AG04449 (cell line): ENCODE measurements at regions of chr3 and their contacts with region 1.

Region 1: DNA sequence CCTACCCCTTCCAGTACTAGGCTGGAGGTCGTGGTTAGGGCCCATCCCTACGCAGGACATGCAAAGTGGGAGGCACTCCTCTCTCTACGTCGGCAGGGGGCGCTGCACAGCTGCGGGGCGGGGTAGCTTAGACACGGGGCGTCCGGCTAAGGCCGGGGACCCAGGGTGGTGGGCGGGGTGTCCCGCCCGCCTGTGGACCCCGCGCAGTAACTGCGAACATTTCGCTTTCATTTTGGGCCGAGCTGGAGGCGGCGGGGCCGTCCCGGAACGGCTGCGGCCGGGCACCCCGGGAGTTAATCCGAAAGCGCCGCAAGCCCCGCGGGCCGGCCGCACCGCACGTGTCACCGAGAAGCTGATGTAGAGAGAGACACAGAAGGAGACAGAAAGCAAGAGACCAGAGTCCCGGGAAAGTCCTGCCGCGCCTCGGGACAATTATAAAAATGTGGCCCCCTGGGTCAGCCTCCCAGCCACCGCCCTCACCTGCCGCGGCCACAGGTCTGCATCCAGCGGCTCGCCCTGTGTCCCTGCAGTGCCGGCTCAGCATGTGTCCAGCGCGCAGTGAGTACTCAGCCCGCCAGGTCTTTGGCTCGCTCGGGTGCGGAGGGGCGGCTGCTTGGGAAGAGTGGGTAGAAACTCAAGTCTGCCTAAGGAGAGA is at the start of gene IL12A:
- DNase-seq: no peak
- H3K4me3 ChIP-seq: peak within 1 kb of the TSS; percentile 66
- CTCF ChIP-seq: peak; percentile 98

Region 2: GRCh38 chr3:159038405-159038804 is 950.3 kb before region 1 on chr3:
- CTCF ChIA-PET with region 1: no interaction called
- POLR2A ChIA-PET with region 1: no interaction called
- DNase-seq: no peak
- H3K4me3 ChIP-seq: no peak overlapping the region
- CTCF ChIP-seq: no peak

Region 3: GRCh38 chr3:159852821-159853505 is 135.8 kb before region 1 on chr3:
- CTCF ChIA-PET with region 1: interaction called, 36 read pairs
- POLR2A ChIA-PET with region 1: no interaction called
- DNase-seq: no peak
- H3K4me3 ChIP-seq: peak overlapping the region; percentile 43
- CTCF ChIP-seq: no peak

Region 4: GRCh38 chr3:159897331-159898075 is 91.2 kb before region 1 on chr3:
- CTCF ChIA-PET with region 1: interaction called, 158 read pairs
- POLR2A ChIA-PET with region 1: no interaction called
- DNase-seq: no peak
- H3K4me3 ChIP-seq: no peak overlapping the region
- CTCF ChIP-seq: no peak

Region 5: DNA sequence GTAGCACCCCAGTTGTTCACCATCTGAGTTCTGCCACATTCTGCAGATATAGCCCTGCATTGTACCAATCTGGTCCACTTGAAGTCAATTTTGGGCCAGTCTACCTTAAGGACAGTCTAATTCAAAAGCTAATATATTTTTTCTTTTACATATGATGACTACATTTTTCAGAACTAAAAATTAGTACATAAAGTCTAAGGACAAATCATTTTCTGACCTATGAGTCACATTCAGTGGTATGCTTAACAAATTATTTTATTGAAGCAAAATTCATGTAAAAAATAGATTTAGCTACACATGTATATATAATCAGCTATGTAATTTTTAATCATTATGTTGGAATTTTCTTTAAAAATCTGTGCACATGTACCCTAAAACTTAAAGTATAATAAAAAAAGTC is 52.2 kb before region 1 on chr3:
- CTCF ChIA-PET with region 1: interaction called, 92 read pairs
- POLR2A ChIA-PET with region 1: no interaction called
- DNase-seq: no peak
- H3K4me3 ChIP-seq: no peak overlapping the region
- CTCF ChIP-seq: no peak

Region 6: GRCh38 chr3:159964166-159964973 is 24.4 kb before region 1 on chr3:
- CTCF ChIA-PET with region 1: interaction called, 44 read pairs
- POLR2A ChIA-PET with region 1: no interaction called
- DNase-seq: peak; percentile 38
- H3K4me3 ChIP-seq: no peak overlapping the region; the same call in 1 of the 2 replicates
- CTCF ChIP-seq: no peak